Right cardiac atrium (tissue), 5 donors: ENCODE measurements at regions of chr1 and their contacts with region 1.

Region 1: GRCh38 chr1:20223551-20224419 is 37.5 kb upstream of the PLA2G2C start:
- DNase-seq: no peak
- ATAC-seq: no peak
- H3K4me3 ChIP-seq: no peak overlapping the region
- H3K27ac ChIP-seq: no peak overlapping the region
- H3K4me1 ChIP-seq: no peaks in the 10 kb centered on the region
- H3K27me3 ChIP-seq: no peaks in the 10 kb centered on the region

Region 2: DNA sequence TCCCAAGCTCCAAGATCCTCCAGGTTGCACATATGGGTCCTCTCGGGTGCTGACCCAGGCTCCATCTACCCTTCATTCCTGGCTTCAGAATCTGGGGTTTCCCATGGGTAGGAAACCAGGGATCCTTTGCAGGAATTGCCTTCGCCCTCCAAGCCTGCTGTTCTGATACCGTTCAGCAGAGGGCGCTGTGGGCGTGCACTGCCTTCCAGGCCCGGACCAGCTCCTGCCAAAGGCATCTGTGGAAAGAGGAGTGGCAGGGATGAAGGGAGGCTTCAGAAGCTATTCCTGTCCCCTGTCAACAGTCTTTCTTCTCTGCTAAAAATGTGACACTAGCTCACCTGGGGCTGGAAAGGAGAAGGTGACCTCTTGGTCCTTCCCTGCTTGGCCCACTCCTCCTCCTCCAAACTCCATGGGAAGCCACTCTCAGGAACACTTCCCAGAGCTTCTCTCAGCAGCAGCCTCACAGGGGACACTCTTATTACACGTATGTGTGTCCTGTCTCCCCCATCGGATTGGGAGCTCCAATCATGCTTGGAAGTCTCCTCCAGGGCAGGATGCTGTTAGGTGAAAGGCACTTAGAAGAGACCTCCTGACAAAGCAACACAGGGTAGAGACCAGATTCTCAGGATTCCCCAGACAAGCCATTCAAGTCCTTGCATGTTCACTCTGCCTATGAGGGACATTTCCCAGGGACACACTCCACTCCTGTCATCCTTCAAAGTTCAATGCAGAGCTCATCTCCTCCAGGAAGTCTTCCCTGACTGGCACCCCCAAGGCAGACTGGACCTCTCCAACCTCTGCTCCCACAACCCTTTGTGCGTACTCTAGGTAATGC is 138.2 kb after region 1 on chr1:
- intact Hi-C with region 1: loop called in 2 of 4 experiments (anchors 5 to 10 kb)
- DNase-seq: peak; percentile 56 to 86 (median 83)
- ATAC-seq: peak in 1 of 2 donors; percentile 40
- H3K4me3 ChIP-seq: no peak overlapping the region
- H3K27ac ChIP-seq: no peak overlapping the region
- H3K4me1 ChIP-seq: peaks cover 2% of the 10 kb centered on the region
- H3K27me3 ChIP-seq: no peaks in the 10 kb centered on the region

Region 3: GRCh38 chr1:20367116-20367585 is 143.4 kb after region 1 on chr1:
- intact Hi-C with region 1: loop called in 2 of 4 experiments (anchors 5 to 10 kb)
- DNase-seq: peak; percentile 29 to 67 (median 60)
- ATAC-seq: peak; percentile 57 to 78
- H3K4me3 ChIP-seq: peak overlapping the region; percentile 7
- H3K27ac ChIP-seq: no peak overlapping the region
- H3K4me1 ChIP-seq: no peaks in the 10 kb centered on the region
- H3K27me3 ChIP-seq: no peaks in the 10 kb centered on the region